ENCODE measurements at regions of chr1 and their contacts with region 1.

Region 1: DNA sequence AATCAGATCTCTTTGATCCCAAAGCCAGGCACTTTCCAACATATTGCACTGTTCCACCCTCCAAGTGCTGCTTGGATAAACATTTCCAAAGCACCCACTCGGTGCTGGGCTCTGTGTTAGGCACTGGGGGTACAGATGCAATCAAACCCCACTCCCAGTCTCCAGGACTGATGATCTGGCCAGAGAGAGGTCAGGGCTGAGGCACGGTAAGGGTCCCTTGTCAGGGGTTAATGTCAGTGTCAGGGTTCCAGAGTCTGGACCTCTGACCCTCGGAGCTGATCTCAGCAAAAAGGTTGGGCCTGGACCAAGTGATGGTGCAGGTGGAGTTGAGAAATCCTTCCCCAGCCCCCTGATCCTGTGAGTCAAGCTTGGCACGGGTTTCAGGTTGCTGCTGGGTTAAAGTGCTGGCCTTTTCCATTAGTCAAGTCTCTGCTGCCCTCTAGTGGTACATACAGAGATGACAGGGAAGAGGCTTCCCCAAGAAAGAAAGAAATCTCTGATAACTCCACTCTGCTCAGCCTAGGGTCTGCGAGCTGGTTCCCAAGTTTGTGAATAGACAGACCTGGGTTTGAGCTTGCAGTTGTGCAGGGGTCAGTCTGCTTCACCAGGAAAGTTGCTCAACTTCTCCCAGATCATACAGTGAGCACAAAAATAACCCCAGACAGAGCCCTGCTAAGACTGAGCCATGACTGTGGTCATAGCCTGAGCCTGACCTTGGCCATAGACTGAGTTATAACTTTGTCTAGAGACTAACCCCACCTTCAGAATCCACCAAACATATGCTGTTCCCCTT is 74.6 kb downstream of the DMRTA2 start:
- DNase-seq: peak in 1 of 2 donors; percentile 69
- ATAC-seq: peak; percentile 46 to 87 (median 69)
- H3K4me3 ChIP-seq: no peak overlapping the region
- H3K4me3 Mint-ChIP-seq: no peak overlapping the region
- H3K27ac ChIP-seq: no peak overlapping the region
- H3K27ac Mint-ChIP-seq: no peak overlapping the region
- H3K4me1 ChIP-seq: no peaks in the 10 kb centered on the region
- H3K4me1 Mint-ChIP-seq: no peaks in the 10 kb centered on the region
- H3K27me3 ChIP-seq: no peaks in the 10 kb centered on the region
- H3K27me3 Mint-ChIP-seq: peaks cover 11 to 26% of the 10 kb centered on the region in 2 donors
- CTCF ChIP-seq: peak; percentile 83

Region 2: DNA sequence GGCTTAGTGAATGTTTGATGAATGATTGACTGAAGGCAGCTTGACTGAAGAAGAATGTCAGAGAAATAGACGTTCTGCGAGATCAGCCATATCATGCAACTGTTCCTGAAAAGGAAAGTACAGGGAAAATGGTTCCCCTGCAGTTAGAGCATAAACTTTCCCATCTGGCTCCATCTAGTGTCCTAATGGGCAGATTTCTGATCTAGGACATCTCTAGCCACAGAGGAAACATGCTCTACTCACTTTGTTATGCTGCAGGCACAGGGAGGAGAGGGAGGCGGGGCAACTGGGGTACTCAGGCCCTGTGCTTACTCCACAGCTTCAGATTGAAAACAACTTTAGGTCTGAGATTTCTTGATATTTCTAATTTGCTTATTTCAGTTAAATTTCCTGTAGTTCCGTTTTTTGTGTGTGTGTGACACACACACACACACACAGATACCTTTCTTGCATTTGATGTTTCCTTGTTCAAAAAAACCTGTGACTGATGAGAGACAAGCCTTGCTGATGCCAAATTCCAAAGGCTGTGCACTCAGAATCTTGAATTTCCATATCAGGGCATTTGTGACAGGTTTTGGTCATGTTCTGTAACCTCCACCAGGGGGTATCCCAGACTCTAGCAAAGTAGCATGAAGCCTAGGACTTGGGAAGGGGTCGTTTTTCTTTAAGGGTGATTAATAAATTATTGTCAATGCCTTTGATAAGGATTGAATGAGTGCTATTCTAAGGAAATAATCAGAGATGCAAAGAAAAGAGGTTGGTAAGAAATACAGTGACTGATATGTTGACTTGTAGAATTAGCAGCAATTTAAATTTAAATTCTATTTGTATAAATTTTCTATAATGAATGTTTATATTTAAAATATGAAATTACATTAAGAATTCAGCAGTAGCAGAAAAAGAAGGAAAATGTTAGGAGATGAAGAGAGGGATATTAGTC is 1432.2 kb before region 1 on chr1:
- intact Hi-C with region 1: loop called (anchors 10 kb)
- DNase-seq: peak in 1 of 2 donors; percentile 3
- ATAC-seq: no peak
- H3K4me3 ChIP-seq: no peak overlapping the region
- H3K4me3 Mint-ChIP-seq: no peak overlapping the region
- H3K27ac ChIP-seq: no peak overlapping the region
- H3K27ac Mint-ChIP-seq: no peak overlapping the region
- H3K4me1 ChIP-seq: no peaks in the 10 kb centered on the region
- H3K4me1 Mint-ChIP-seq: no peaks in the 10 kb centered on the region
- H3K27me3 ChIP-seq: peaks cover 2% of the 10 kb centered on the region
- H3K27me3 Mint-ChIP-seq: no peaks in the 10 kb centered on the region
- CTCF ChIP-seq: no peak

Region 3: DNA sequence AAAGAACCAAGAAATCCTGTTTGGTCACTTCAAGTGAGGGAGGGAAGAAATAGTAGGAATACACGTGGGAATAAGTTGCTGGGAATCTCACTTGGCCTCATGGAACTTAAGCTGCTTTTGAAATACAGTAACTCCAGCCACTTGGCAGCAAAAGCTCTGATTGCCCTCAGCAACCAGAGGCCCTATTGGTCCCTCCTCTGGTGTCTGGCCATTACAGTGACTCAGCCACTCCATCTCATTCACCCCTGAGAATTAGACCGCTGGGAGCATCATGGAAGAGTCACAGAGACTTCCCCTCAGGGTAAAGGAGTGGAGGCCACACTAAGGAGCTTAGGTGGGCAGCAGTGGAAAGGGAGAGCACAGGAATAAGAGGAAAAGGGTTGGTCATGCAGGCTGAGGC is 140.3 kb before region 1 on chr1:
- intact Hi-C with region 1: no loop called
- DNase-seq: no peak
- ATAC-seq: no peak
- H3K4me3 ChIP-seq: no peak overlapping the region
- H3K4me3 Mint-ChIP-seq: no peak overlapping the region
- H3K27ac ChIP-seq: no peak overlapping the region
- H3K27ac Mint-ChIP-seq: no peak overlapping the region
- H3K4me1 ChIP-seq: no peaks in the 10 kb centered on the region
- H3K4me1 Mint-ChIP-seq: no peaks in the 10 kb centered on the region
- H3K27me3 ChIP-seq: no peaks in the 10 kb centered on the region
- H3K27me3 Mint-ChIP-seq: peaks cover 3 to 20% of the 10 kb centered on the region in 2 donors
- CTCF ChIP-seq: no peak